Gastrocnemius medialis (tissue), 4 donors: ENCODE measurements at regions of chr12 and their contacts with region 1.

Region 1: DNA sequence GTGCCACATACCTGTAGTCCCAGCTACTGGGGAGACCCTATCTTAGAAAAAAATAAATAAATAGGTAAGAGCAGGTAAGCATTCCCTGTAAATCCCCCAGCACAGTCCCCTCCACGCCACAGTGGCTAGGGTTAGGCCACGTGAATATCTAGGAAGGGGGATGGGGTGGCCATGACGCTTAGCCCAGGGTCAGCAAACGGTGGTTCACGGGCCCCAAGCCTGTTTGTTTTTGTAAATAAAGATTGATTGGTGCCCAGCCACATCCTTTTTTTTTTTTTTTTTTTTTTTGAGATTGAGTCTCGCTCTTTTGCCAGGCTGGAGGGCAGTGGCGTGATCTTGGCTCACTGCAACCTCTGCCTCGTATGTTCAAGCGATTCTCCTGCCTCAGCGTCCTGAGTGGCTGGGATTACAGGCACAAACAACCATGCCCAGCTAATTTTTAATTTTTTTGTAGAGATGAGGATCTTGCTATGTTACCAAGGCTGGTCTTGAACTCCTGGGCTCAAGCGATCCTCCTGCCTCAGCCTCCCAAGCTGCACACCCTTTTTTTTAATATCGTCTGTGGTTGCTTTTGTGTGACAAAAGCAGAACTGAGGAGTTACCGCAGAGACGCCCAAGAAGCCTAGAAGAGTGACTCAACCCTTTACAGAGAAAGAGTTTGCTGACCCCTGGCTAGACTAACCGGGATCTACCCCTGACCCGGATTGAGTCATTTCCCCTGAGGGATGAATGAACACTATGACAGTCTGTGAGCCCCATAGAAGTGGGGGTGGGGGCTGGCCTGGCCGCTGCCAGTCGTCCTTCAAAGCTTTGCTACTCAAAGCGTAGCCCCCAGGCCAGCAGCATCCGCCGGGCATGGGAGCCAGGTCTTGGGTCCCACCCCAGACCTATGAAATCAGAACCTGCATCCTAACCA is 113.7 kb upstream of the NCOR2 start:
- DNase-seq: peak; percentile 59 to 71
- ATAC-seq: peak; percentile 67 to 74
- H3K4me3 ChIP-seq: no peak overlapping the region
- H3K27ac ChIP-seq: peak overlapping the region; percentile 40 to 80 (median 72)
- H3K4me1 ChIP-seq: peaks cover 46 to 47% of the 10 kb centered on the region in 2 donors
- H3K27me3 ChIP-seq: no peaks in the 10 kb centered on the region
- CTCF ChIP-seq: peak in 1 of 5 experiments; percentile 39
- POLR2A ChIP-seq: no peak

Region 2: DNA sequence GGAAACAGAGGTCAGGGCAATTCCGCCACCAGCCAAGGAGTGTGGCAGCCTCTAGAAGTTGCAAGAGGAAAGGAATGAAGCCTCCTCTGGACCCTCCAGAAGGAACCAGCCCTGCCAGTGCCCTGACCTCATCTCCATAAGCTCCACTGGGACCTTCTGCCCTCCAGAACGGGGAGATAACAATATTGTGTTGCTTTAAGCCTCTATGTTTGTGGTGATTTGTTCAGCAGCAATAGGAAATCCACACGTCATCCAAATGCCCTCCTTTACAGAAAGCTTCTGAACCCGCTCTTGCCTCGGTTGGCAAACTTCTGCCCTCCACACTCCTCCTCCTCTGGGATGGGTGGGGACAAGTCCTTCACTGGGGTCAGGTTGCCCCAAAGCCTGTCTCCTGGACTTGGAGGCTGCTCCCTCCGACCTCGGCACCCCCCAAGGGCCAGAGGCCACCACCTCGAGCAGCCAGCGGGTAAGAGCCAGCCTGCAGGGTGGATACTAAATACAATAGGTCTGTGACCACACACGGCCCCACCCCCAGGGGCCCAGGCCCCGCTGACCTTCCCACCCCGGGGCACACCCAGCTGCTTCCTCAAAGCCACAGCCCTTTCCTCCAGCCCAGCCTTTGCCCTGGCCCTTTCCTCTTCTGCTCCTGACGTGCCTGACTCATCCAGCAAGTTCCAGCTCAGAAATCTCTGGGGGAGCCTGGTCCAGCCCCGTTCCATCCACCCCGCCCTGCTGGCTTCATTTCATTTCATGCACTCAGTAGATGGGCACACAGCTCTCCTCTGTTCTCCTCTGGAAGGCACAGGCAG is 55.0 kb before region 1 on chr12:
- in situ Hi-C with region 1: loop called in 1 of 4 experiments (anchors 10 kb)
- intact Hi-C with region 1: no loop called
- DNase-seq: peak; percentile 72 to 81
- ATAC-seq: peak; percentile 81 to 82
- H3K4me3 ChIP-seq: no peak overlapping the region
- H3K27ac ChIP-seq: peak overlapping the region; percentile 72 to 85 (median 74)
- H3K4me1 ChIP-seq: peaks cover 18 to 27% of the 10 kb centered on the region in 2 donors
- H3K27me3 ChIP-seq: no peaks in the 10 kb centered on the region
- CTCF ChIP-seq: no peak
- POLR2A ChIP-seq: peak; percentile 7 to 22

Region 3: DNA sequence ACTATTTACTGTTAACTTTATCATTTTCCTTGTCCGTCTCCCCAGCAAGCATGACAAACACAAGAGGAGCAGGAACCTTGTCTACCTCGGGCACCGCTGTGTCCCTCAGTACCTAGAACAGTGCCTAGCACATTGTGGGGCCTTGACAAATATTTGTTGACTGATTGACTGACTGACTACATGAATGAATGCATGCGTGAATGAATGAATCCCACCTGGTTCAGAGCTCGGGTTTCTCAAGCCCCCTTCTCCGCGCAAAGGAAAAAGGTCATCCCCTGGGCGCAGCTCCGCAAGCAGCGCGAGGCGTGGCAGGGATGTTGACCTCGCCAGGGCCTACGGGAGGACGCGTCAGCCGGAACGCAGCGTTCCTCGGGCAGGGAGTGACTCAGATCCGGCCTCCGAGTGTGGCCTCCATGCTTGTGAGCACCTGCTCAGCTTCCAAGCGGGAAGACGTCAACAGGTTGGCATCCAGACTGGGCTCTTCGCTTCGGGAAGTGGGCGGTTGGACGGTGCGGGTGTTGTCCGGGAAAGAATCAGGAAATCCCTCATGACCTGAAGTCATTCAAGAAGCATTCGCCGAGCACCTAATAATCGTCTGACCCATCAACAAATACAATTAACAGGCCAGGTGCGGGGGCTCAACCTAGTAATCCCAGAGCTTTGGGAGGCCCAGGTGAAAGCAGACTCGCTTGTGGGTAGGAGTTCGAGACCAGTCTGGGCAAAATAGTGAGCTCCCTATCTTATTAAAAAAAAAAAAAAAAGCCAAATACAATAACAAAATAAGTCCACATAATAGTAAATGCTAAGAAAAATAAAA is 247.2 kb after region 1 on chr12:
- in situ Hi-C with region 1: no loop called
- intact Hi-C with region 1: no loop called
- DNase-seq: peak; percentile 74 to 83
- ATAC-seq: peak; percentile 65 to 72
- H3K4me3 ChIP-seq: peak overlapping the region; percentile 59 to 80 (median 72)
- H3K27ac ChIP-seq: peak overlapping the region; percentile 88 to 98 (median 92)
- H3K4me1 ChIP-seq: peaks cover 4 to 14% of the 10 kb centered on the region in 2 donors
- H3K27me3 ChIP-seq: no peaks in the 10 kb centered on the region
- CTCF ChIP-seq: no peak
- POLR2A ChIP-seq: peak in 1 of 2 donors; percentile 8